Activated B cell treated with CpG ODN at 0.5 μM for 24 hours (primary cell): ENCODE measurements at regions of chr7 and their contacts with region 1.

Region 1: GRCh38 chr7:129468087-129468486 is 33.9 kb downstream of the STRIP2 start:
- DNase-seq: no peak
- ATAC-seq: no peak
- H3K4me3 Mint-ChIP-seq: no peak overlapping the region
- H3K27ac Mint-ChIP-seq: no peak overlapping the region
- H3K4me1 Mint-ChIP-seq: no peaks in the 10 kb centered on the region
- H3K27me3 Mint-ChIP-seq: no peaks in the 10 kb centered on the region
- CTCF ChIP-seq: no peak

Region 2: DNA sequence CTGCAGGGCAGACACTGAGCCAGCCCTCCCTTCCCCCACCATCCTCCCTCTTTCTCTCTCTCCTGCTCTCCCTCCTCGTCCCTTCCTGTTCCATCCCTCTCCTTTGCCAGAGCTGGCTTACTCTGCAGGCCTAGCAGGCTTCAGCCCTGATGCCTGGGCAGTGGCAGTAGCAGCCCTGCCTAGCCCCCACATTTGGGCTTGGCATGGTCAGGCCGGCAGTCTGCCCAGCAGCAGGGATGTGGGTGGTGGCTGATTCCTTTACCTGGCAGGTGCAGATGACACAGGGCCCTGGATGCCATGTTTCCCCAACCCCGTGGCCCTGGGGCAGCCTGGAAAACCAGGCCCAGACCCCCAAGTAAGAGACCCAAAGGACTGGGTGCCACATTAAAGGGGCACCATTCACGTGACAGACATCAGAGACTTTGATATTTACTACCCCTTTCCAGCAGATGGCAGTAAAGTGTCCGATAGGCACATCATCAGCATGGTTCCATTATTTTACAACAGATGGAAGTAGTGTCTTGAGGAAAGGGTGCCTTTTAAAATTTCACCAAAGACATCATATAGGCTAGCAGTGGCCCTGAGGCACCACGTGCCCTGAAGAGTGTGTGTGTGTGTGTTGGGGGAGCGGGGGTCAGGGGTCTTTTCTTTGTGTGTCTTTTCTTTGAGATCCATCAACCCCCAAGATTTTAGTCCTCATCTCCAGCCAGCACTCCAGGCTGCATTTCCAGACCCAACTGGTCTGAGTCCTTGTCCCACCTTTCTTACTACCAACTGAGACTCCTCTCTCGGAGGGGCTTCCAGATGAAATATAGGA is 563.5 kb before region 1 on chr7:
- CTCF ChIA-PET with region 1: no interaction called
- POLR2A ChIA-PET with region 1: no interaction called
- intact Hi-C with region 1: loop called (anchors 10 kb)
- DNase-seq: no peak
- ATAC-seq: peak; percentile 90
- H3K4me3 Mint-ChIP-seq: no peak overlapping the region
- H3K27ac Mint-ChIP-seq: no peak overlapping the region
- H3K4me1 Mint-ChIP-seq: peaks cover 8% of the 10 kb centered on the region
- H3K27me3 Mint-ChIP-seq: peaks cover 7% of the 10 kb centered on the region
- CTCF ChIP-seq: no peak

Region 3: GRCh38 chr7:129298268-129298893 is 169.7 kb before region 1 on chr7:
- CTCF ChIA-PET with region 1: no interaction called
- POLR2A ChIA-PET with region 1: no interaction called
- intact Hi-C with region 1: loop called (anchors 1 kb)
- DNase-seq: no peak
- ATAC-seq: no peak
- H3K4me3 Mint-ChIP-seq: no peak overlapping the region
- H3K27ac Mint-ChIP-seq: no peak overlapping the region
- H3K4me1 Mint-ChIP-seq: no peaks in the 10 kb centered on the region
- H3K27me3 Mint-ChIP-seq: no peaks in the 10 kb centered on the region
- CTCF ChIP-seq: peak; percentile 64

Region 4: GRCh38 chr7:129367700-129368388 is 100.2 kb before region 1 on chr7:
- CTCF ChIA-PET with region 1: interaction called, 42 read pairs
- POLR2A ChIA-PET with region 1: interaction called, 3 read pairs
- intact Hi-C with region 1: loop called (anchors 1 kb)
- DNase-seq: peak; percentile 50
- ATAC-seq: peak; percentile 85
- H3K4me3 Mint-ChIP-seq: peak overlapping the region; percentile 61
- H3K27ac Mint-ChIP-seq: peak overlapping the region; percentile 46
- H3K4me1 Mint-ChIP-seq: peaks cover 27% of the 10 kb centered on the region
- H3K27me3 Mint-ChIP-seq: no peaks in the 10 kb centered on the region
- CTCF ChIP-seq: no peak

Region 5: GRCh38 chr7:129493555-129493954 is 25.5 kb after region 1 on chr7:
- CTCF ChIA-PET with region 1: no interaction called
- POLR2A ChIA-PET with region 1: no interaction called
- intact Hi-C with region 1: loop called (anchors 1 kb)
- DNase-seq: no peak
- ATAC-seq: peak; percentile 54
- H3K4me3 Mint-ChIP-seq: peak overlapping the region; percentile 28
- H3K27ac Mint-ChIP-seq: peak overlapping the region; percentile 77
- H3K4me1 Mint-ChIP-seq: peaks cover 19% of the 10 kb centered on the region
- H3K27me3 Mint-ChIP-seq: no peaks in the 10 kb centered on the region
- CTCF ChIP-seq: no peak

Region 6: DNA sequence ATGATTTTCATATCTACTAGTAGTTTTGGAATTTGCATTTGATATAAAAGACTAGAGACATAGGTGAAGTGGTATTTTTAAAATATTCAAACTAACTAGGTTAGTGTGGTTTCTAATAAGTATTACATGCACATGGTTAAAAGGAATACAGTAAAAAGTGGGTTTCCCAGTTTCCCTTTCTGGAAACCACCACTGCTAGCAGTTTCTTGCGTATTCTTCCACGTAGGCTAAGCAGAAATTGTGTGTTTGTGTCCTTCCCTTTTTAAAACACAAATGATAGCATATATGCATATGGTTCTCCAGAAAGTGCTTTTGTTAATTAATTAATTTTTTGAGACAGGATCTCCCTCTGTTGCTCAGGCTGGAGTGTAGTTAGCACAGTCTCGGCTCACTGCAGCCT is 158.8 kb after region 1 on chr7:
- CTCF ChIA-PET with region 1: no interaction called
- POLR2A ChIA-PET with region 1: no interaction called
- intact Hi-C with region 1: no loop called
- DNase-seq: no peak
- ATAC-seq: no peak
- H3K4me3 Mint-ChIP-seq: no peak overlapping the region
- H3K27ac Mint-ChIP-seq: no peak overlapping the region
- H3K4me1 Mint-ChIP-seq: peaks cover 50% of the 10 kb centered on the region
- H3K27me3 Mint-ChIP-seq: no peaks in the 10 kb centered on the region
- CTCF ChIP-seq: no peak

Region 7: DNA sequence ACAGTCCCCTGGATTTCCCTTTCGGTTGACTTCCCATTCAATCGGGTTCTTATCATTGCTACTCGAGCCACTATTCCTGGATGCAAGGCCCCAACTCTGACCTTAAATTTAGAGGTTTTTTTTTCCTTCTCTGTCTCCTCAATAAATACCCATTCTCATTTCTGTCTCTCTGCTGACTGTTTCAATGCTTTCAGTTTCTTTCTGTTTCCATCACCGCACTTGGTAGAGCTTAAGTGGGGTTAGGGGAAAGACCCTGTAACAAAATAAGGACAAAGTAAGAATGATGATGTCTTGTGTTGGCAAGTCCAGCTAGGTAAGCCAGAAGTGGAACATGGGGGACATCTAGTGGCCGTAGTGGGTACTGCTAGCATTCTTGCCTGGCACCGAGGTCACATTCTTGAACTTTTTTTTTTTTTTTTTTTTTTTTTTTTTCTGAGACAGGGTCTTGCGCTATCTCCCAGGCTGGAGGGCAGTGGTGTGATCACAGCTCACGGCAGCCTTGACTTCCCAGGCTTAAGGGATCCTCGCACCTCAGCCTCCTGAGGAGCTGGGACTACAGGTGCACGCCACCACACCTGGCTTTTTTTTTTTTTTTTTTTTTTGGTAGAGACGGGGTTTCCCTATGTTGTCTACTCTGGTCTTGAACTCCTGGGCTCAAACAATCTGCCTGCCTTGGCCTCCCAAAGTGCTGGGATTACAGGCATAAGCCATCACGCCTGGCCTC is 542.8 kb after region 1 on chr7:
- CTCF ChIA-PET with region 1: no interaction called
- POLR2A ChIA-PET with region 1: no interaction called
- intact Hi-C with region 1: loop called (anchors 1 kb)
- DNase-seq: peak; percentile 74
- ATAC-seq: peak; percentile 91
- H3K4me3 Mint-ChIP-seq: no peak overlapping the region
- H3K27ac Mint-ChIP-seq: no peak overlapping the region
- H3K4me1 Mint-ChIP-seq: peaks cover 9% of the 10 kb centered on the region
- H3K27me3 Mint-ChIP-seq: no peaks in the 10 kb centered on the region
- CTCF ChIP-seq: peak; percentile 51